CD8-positive, alpha-beta T cell (primary cell): ENCODE measurements at regions of chr2 and their contacts with region 1.

Region 1: GRCh38 chr2:135741395-135742324 is at the start of gene UBXN4:
- DNase-seq: peak; percentile 89 to 99 (median 94)
- ATAC-seq: peak; percentile 87
- H3K4me3 ChIP-seq: peak within 1 kb of the TSS; percentile 69 to 96
- H3K4me3 Mint-ChIP-seq: peak within 1 kb of the TSS; percentile 98
- H3K27ac ChIP-seq: peak within 1 kb of the TSS; percentile 89 to 98
- H3K27ac Mint-ChIP-seq: peak within 1 kb of the TSS; percentile 98
- H3K4me1 ChIP-seq: peaks cover 28% of the 10 kb centered on the region
- H3K4me1 Mint-ChIP-seq: peaks cover 43% of the 10 kb centered on the region
- H3K27me3 ChIP-seq: no peaks in the 10 kb centered on the region
- H3K27me3 Mint-ChIP-seq: no peaks in the 10 kb centered on the region
- CTCF ChIP-seq: no peak
- total RNA-seq, gene UBXN4: 157 to 172 TPM

Region 2: DNA sequence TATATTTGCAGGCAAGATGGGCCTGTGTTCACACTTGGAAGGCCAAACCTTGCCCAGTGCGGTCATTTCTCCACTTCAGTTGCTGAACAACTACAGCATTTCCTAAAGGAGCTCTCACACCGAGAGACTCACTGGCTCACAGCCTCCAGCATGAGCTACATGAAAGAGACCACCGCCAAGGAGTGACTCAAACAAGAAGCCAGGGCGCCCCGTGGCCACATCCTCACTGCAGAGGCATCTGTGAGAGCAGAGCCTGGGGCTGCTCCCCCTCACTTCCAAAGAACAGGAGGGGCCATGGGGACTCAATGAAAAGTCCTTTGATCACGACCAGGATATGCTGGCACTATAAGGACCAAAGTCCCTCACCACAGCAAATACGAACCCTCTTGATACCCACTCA is 1072.8 kb before region 1 on chr2:
- CTCF ChIA-PET with region 1: no interaction called
- POLR2A ChIA-PET with region 1: no interaction called
- intact Hi-C with region 1: loop called in 1 of 2 experiments (anchors 5 kb)
- DNase-seq: peak; percentile 50 to 95 (median 78)
- ATAC-seq: peak; percentile 73
- H3K4me3 ChIP-seq: peak overlapping the region; percentile 0 to 10
- H3K4me3 Mint-ChIP-seq: peak overlapping the region; percentile 42
- H3K27ac ChIP-seq: peak overlapping the region in 1 of 2 experiments; percentile 83
- H3K27ac Mint-ChIP-seq: peak overlapping the region; percentile 82
- H3K4me1 ChIP-seq: peaks cover 60% of the 10 kb centered on the region
- H3K4me1 Mint-ChIP-seq: peaks cover 82% of the 10 kb centered on the region
- H3K27me3 ChIP-seq: no peaks in the 10 kb centered on the region
- H3K27me3 Mint-ChIP-seq: peaks cover 20% of the 10 kb centered on the region
- CTCF ChIP-seq: no peak

Region 3: GRCh38 chr2:135664623-135665068 is 77.0 kb before region 1 on chr2:
- CTCF ChIA-PET with region 1: no interaction called
- POLR2A ChIA-PET with region 1: no interaction called
- intact Hi-C with region 1: loop called in 1 of 2 experiments (anchors 5 kb)
- DNase-seq: no peak
- ATAC-seq: no peak
- H3K4me3 ChIP-seq: no peak overlapping the region
- H3K4me3 Mint-ChIP-seq: no peak overlapping the region
- H3K27ac ChIP-seq: no peak overlapping the region
- H3K27ac Mint-ChIP-seq: peak overlapping the region; percentile 1
- H3K4me1 ChIP-seq: peaks cover 3% of the 10 kb centered on the region
- H3K4me1 Mint-ChIP-seq: peaks cover 29% of the 10 kb centered on the region
- H3K27me3 ChIP-seq: no peaks in the 10 kb centered on the region
- H3K27me3 Mint-ChIP-seq: no peaks in the 10 kb centered on the region
- CTCF ChIP-seq: no peak

Region 4: GRCh38 chr2:135876066-135876711 is 134.5 kb after region 1 on chr2 and contains the start of gene MCM6:
- CTCF ChIA-PET with region 1: no interaction called
- POLR2A ChIA-PET with region 1: interaction called, 3 read pairs
- intact Hi-C with region 1: loop called (anchors 1 kb)
- DNase-seq: peak; percentile 95 to 99 (median 97)
- ATAC-seq: peak; percentile 89
- H3K4me3 ChIP-seq: peak within 1 kb of the TSS; percentile 81 to 82
- H3K4me3 Mint-ChIP-seq: peak within 1 kb of the TSS; percentile 92
- H3K27ac ChIP-seq: peak within 1 kb of the TSS; percentile 85 to 96
- H3K27ac Mint-ChIP-seq: peak within 1 kb of the TSS; percentile 97
- H3K4me1 ChIP-seq: peaks cover 18% of the 10 kb centered on the region
- H3K4me1 Mint-ChIP-seq: peaks cover 37% of the 10 kb centered on the region
- H3K27me3 ChIP-seq: no peaks in the 10 kb centered on the region
- H3K27me3 Mint-ChIP-seq: no peaks in the 10 kb centered on the region
- CTCF ChIP-seq: no peak
- total RNA-seq, gene MCM6: 37.3 to 38.8 TPM

Region 5: GRCh38 chr2:135997380-135997779 is 255.7 kb after region 1 on chr2:
- CTCF ChIA-PET with region 1: no interaction called
- POLR2A ChIA-PET with region 1: no interaction called
- intact Hi-C with region 1: no loop called
- DNase-seq: peak in 4 of 9 experiments; percentile 24 to 46 (median 30)
- ATAC-seq: no peak
- H3K4me3 ChIP-seq: no peak overlapping the region
- H3K4me3 Mint-ChIP-seq: no peak overlapping the region
- H3K27ac ChIP-seq: no peak overlapping the region
- H3K27ac Mint-ChIP-seq: no peak overlapping the region
- H3K4me1 ChIP-seq: peaks cover 5% of the 10 kb centered on the region
- H3K4me1 Mint-ChIP-seq: peaks cover 20% of the 10 kb centered on the region
- H3K27me3 ChIP-seq: no peaks in the 10 kb centered on the region
- H3K27me3 Mint-ChIP-seq: no peaks in the 10 kb centered on the region
- CTCF ChIP-seq: no peak

Region 6: GRCh38 chr2:136008205-136008865 is 266.7 kb after region 1 on chr2:
- CTCF ChIA-PET with region 1: no interaction called
- POLR2A ChIA-PET with region 1: no interaction called
- intact Hi-C with region 1: no loop called
- DNase-seq: peak; percentile 43 to 92 (median 61)
- ATAC-seq: peak; percentile 97
- H3K4me3 ChIP-seq: no peak overlapping the region
- H3K4me3 Mint-ChIP-seq: peak overlapping the region; percentile 40
- H3K27ac ChIP-seq: peak overlapping the region; percentile 29 to 82
- H3K27ac Mint-ChIP-seq: peak overlapping the region; percentile 88
- H3K4me1 ChIP-seq: peaks cover 21% of the 10 kb centered on the region
- H3K4me1 Mint-ChIP-seq: peaks cover 36% of the 10 kb centered on the region
- H3K27me3 ChIP-seq: no peaks in the 10 kb centered on the region
- H3K27me3 Mint-ChIP-seq: no peaks in the 10 kb centered on the region
- CTCF ChIP-seq: no peak

Region 7: GRCh38 chr2:136384531-136385303 is 643.1 kb after region 1 on chr2:
- CTCF ChIA-PET with region 1: no interaction called
- POLR2A ChIA-PET with region 1: no interaction called
- intact Hi-C with region 1: loop called in 1 of 2 experiments (anchors 10 kb)
- DNase-seq: peak in 8 of 9 experiments; percentile 32 to 82 (median 60)
- ATAC-seq: peak; percentile 53
- H3K4me3 ChIP-seq: no peak overlapping the region
- H3K4me3 Mint-ChIP-seq: no peak overlapping the region
- H3K27ac ChIP-seq: no peak overlapping the region
- H3K27ac Mint-ChIP-seq: peak overlapping the region; percentile 69
- H3K4me1 ChIP-seq: peaks cover 25% of the 10 kb centered on the region
- H3K4me1 Mint-ChIP-seq: peaks cover 36% of the 10 kb centered on the region
- H3K27me3 ChIP-seq: no peaks in the 10 kb centered on the region
- H3K27me3 Mint-ChIP-seq: no peaks in the 10 kb centered on the region
- CTCF ChIP-seq: peak; percentile 77